ENCODE measurements at regions of chr19 and their contacts with region 1.

Region 1: GRCh38 chr19:56748378-56748777 is 76.8 kb upstream of the ZNF835 start:
- DNase-seq: no peak
- ATAC-seq: no peak
- H3K4me3 ChIP-seq: no peak overlapping the region
- H3K4me3 Mint-ChIP-seq: no peak overlapping the region
- H3K27ac ChIP-seq: no peak overlapping the region
- H3K27ac Mint-ChIP-seq: no peak overlapping the region
- H3K4me1 ChIP-seq: no peaks in the 10 kb centered on the region
- H3K4me1 Mint-ChIP-seq: no peaks in the 10 kb centered on the region
- H3K27me3 ChIP-seq: no peaks in the 10 kb centered on the region
- H3K27me3 Mint-ChIP-seq: no peaks in the 10 kb centered on the region
- CTCF ChIP-seq: no peak

Region 2: DNA sequence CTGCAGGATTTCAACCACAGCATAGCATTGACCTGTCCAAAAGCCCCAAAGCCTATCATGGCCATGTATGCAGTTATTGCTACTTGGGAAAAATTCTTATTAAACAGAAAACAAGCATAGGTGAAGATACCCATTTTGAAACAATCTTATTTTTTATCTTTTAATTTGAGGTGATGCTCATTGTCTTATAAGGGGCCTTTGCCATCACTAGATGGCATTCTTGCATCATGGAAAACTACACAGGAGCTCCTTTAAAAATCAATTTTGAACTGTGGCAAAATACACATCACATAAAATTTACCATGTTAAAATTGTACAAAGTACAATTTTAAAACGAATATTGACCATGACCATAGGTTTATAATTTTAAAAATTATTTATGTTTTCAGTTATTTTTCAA is 37.9 kb before region 1 on chr19:
- intact Hi-C with region 1: loop called (anchors 2 kb)
- DNase-seq: no peak
- ATAC-seq: no peak
- H3K4me3 ChIP-seq: no peak overlapping the region
- H3K4me3 Mint-ChIP-seq: no peak overlapping the region
- H3K27ac ChIP-seq: no peak overlapping the region
- H3K27ac Mint-ChIP-seq: no peak overlapping the region
- H3K4me1 ChIP-seq: no peaks in the 10 kb centered on the region
- H3K4me1 Mint-ChIP-seq: no peaks in the 10 kb centered on the region
- H3K27me3 ChIP-seq: no peaks in the 10 kb centered on the region
- H3K27me3 Mint-ChIP-seq: no peaks in the 10 kb centered on the region
- CTCF ChIP-seq: no peak

Measured in natural killer cell (primary cell).